Activated T-helper 2 cell treated with anti-CD3 and anti-CD28 coated beads, Interferon-gamma antibody, Interleukin-2, Interleukin-4, amounts not matched to agents 10 μg/mL and 5 μg/mL and 100 μg/mL, durations not matched to agents 14 hours and 24 hours and 36 hours (primary cell): ENCODE measurements at regions of chr5 and their contacts with region 1.

Region 1: DNA sequence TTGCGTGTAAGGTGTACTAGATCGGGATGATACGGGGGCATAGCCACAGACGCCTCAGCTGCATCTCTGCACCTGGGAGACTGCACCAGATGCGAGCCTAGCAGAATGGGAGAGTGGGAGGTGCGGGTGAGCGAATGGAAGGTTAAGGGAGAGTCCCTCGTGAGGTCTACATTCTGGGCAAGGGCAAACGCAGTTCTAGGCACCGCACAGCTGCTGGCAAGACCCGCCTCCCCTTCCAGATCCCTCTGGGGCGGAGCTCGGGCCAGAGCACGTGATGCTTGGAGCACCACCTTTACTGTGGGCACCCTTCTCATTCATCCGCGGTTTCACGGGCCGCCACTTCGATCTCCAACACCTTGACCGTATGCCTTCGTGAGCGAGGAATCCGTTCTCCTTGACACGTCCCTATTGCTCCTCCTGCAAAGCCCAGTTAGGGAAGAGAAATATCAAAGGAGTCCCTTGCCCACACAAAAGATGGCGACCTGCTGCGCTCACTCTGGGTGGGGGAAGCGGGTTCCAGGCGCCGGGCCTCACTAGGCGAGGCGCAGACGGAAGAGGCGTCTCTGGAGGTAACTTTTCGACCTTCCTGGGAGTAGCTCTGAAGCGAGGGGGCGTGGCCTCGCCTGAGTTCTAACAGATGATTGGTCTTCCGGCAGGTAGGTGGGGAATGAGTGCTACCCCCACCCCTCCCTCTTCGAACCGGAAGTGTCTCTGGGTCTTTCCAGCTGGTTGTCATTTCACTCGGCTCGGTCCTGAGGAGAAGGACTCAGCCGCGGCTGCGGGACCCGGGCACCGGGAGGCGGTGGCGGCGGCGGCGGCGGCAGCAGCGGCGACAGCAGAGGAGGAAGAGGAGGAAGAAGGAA is at the start of gene CPEB4:
- DNase-seq: peak; percentile 96
- H3K4me3 Mint-ChIP-seq: peak within 1 kb of the TSS; percentile 92
- H3K27ac Mint-ChIP-seq: peak within 1 kb of the TSS; percentile 99
- H3K4me1 Mint-ChIP-seq: peaks cover 61% of the 10 kb centered on the region
- H3K27me3 Mint-ChIP-seq: no peaks in the 10 kb centered on the region
- total RNA-seq, gene CPEB4: 8.1 and 12.2 TPM in 2 replicates

Region 2: DNA sequence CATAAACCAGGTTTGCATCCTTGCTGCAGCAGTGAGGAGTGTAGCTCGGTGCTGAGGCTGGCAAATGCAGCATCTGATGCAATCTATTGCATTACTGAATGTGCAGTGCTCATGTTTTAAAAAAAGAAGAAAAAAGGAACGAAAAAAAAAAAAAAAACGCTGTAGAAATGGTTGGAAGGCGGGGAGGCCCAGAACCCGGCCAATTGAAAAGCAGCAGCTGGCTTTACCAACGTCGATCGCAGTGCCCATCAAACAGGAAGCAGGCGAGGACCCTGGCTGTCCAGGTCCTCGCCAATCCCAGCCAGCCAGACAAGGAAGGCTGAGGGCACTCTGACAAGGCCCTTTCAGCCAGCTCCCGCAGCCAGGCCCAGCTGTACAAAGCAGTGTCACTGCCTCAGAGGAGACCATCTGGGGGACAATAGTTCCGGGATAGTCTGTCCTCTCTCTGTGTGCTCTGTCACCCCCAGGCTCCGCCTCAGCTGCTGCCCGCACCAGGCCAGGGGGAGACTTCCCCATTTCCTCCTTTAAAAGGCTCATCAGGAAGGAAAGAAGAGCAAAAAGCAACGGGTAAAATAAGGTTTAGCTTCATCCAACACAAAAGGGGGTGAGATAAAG is 21.5 kb before region 1 on chr5:
- intact Hi-C with region 1: no loop called
- DNase-seq: no peak
- H3K4me3 Mint-ChIP-seq: no peak overlapping the region
- H3K27ac Mint-ChIP-seq: no peak overlapping the region
- H3K4me1 Mint-ChIP-seq: no peaks in the 10 kb centered on the region
- H3K27me3 Mint-ChIP-seq: no peaks in the 10 kb centered on the region

Region 3: DNA sequence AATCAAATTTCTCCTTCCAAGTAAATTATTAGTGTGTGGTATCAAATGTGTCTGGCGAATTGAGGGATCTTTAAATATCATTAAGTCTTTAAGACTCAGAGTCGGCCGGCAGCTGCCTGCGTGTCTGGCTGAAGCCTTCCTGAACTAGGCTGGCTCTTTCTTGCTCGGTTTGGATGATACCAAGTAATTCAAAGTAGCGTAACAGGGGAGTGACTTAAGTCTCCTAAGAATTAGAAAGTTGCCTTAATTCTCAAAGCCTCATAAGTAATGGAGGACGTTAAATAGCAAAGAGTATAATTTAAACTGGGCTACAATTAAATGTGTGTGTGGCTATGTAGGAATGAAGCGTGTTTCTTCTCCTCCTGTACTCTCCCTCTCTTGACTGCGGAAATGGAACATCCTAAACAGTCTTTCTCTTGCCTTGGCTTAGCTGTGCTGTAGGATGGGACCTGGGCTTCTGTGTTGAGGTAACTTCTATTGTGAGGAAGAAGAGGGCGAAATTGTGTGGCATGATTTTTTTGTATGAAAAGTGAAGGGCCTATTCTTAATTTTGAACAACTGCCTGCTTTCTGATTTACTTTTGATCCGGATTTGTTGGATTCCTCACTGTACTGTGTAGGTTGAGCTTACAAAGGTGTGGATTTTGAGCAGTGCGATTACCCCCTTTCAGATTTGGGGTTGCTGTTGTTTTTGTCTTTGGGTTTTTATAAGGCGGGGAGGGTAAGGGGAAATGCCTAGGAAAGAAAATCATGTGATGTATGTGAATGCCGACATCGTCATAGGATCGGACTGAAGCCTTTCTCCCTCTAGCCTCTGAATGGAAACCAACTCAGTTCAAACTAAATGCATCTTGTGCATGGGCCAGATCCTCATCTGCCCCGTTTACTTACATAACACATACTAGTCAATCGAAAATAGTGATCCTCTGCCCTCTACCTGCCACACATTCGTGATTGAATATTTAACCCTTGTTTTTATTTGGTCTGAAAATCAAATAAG is 30.2 kb after region 1 on chr5:
- intact Hi-C with region 1: loop called (anchors 1 kb)
- DNase-seq: peak; percentile 34
- H3K4me3 Mint-ChIP-seq: no peak overlapping the region
- H3K27ac Mint-ChIP-seq: no peak overlapping the region
- H3K4me1 Mint-ChIP-seq: peaks cover 5% of the 10 kb centered on the region
- H3K27me3 Mint-ChIP-seq: no peaks in the 10 kb centered on the region

Region 4: DNA sequence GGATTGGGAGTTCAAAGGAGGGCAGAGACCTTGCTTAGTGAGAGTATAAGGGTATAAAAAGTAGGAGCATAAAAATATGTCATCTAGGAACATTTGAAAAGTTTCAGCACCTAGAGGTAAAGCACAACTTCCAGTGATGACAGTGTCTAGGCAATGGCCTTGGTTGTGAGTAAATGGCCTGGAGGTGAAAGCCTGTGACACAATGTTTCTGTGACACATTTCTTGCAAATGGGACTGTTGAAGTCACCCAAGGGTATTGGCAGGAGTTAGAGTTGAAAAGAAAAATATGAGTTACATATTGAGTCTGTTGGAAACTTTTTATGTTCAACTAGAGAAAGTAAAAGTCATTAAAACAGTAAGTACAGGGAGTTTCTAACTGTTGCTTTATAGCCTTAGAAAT is 116.0 kb after region 1 on chr5:
- intact Hi-C with region 1: no loop called
- DNase-seq: no peak
- H3K4me3 Mint-ChIP-seq: no peak overlapping the region
- H3K27ac Mint-ChIP-seq: no peak overlapping the region
- H3K4me1 Mint-ChIP-seq: no peaks in the 10 kb centered on the region
- H3K27me3 Mint-ChIP-seq: peaks cover 18% of the 10 kb centered on the region

Region 5: DNA sequence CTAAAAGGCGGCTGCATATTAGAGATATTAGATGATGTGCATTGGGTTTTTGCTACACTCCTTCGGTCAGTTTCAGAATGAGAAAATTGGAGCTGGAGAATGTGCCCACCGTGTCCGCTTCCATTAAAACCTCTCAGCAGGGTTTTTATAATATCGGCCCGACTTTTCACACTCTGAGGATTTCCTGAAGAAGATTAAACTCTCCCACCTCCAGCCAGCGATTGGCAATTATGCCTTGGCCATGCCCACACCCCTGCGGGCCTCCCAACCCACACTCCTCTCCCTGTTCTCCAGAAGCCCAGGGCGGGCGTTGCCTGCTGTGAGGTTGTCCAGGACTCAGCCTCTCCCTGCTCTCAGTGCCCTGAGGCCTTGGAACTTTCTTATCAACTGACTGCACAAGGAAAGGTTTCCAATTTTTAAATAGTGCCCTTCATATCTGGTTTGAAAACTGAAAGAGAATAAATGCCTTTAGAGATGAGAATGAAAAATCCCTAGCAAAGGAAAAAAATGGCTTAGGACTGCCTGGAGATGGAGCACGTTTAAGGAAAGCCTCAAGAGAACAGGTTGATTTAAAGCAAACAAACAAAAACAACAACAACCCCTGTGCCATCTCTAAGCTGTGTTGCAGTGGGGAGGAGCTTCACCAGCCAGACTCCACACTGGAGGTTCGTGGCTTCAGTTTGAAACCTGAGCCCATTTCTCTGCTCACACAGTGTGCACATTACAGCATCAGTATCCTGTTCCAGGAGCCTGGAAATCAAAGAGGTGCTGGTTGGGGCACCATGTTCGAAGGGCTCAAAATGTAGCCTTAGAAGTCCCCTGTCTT is 450.6 kb after region 1 on chr5:
- intact Hi-C with region 1: no loop called
- DNase-seq: no peak
- H3K4me3 Mint-ChIP-seq: no peak overlapping the region
- H3K27ac Mint-ChIP-seq: no peak overlapping the region
- H3K4me1 Mint-ChIP-seq: no peaks in the 10 kb centered on the region
- H3K27me3 Mint-ChIP-seq: peaks cover 10% of the 10 kb centered on the region